ENCODE measurements at regions of chr3 and their contacts with region 1.

Region 1: DNA sequence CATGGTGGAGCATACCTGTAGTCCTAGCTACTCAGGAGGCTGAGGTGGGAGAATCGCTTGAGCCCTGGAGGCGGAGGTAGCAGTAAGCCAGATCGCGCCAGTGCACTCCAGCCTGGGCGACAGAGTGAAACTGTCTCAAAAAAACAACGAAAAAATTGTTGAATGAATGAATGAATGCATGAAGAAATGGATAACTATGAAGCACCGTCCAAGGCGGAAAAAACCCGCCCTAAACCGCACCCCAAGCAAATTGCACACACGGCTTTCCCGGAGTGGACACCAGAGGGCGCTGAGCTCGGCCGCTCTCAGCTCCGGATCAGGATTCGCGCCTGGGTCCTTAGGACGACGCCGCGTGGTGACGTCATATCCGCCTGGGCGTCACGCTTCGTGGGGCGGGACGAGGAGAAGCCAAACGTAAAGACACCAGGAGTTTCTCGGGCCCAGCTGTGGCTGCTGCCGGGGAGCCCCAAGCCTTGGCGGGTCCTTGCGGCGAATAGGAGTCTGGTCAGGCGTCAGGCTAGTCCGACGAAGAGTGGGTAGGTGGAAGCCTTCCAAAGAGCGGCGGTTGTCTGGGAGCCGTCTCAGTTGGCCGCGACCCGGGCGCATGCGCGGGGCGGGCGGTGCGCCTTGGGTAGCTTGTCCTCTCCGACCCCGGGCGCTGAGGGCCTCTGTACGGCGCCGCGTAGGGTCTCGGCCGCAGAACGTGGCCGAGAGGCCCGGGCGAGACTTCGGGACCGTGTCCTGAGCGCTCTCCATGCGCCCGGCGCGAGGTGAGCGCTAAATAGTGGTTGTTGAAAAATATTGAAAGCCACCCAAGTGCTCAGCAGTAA is at the starts of genes HTD2 and RPP14:
- DNase-seq: peak; percentile 99
- ATAC-seq: peak; percentile 90
- H3K4me3 ChIP-seq: peak within 1 kb of the TSS; percentile 74 to 87 (median 83)
- H3K4me3 Mint-ChIP-seq: peak within 1 kb of the TSS; percentile 98
- H3K27ac ChIP-seq: peak within 1 kb of the TSS; percentile 96 to 99
- H3K27ac Mint-ChIP-seq: peak within 1 kb of the TSS; percentile 100
- H3K4me1 ChIP-seq: peaks cover 24 to 27% of the 10 kb centered on the region in 2 donors
- H3K4me1 Mint-ChIP-seq: peaks cover 31% of the 10 kb centered on the region
- H3K27me3 ChIP-seq: no peaks in the 10 kb centered on the region
- H3K27me3 Mint-ChIP-seq: no peaks in the 10 kb centered on the region
- CTCF ChIP-seq: peak; percentile 90
- total RNA-seq, gene HTD2: 8.8 and 9.3 TPM in 2 replicates
- total RNA-seq, gene RPP14: 17.9 and 18.3 TPM in 2 replicates

Region 2: DNA sequence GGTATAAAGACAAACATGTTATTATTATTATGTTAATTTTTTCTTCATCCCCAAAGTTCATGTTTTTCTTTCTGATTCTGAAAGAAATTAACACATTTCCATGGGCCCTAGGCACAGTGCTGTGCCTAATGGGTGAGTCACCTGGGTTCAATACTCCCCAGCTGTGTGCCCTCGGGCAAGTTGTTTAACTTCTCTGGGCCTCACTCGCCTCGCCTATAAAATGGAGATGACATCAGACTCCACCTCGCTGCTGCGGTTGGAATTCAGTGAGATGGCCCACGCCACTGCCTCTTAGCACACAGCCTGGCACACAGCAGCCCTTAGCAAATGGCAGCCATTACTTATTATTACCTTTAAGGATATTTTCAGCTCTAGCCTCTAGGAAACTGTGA is 117.9 kb before region 1 on chr3:
- CTCF ChIA-PET with region 1: interaction called, 334 read pairs
- POLR2A ChIA-PET with region 1: interaction called, 10 read pairs
- intact Hi-C with region 1: loop called (anchors 1 kb)
- DNase-seq: no peak
- ATAC-seq: no peak
- H3K4me3 ChIP-seq: no peak overlapping the region
- H3K4me3 Mint-ChIP-seq: no peak overlapping the region
- H3K27ac ChIP-seq: no peak overlapping the region
- H3K27ac Mint-ChIP-seq: no peak overlapping the region
- H3K4me1 ChIP-seq: peaks cover 0 to 5% of the 10 kb centered on the region in 2 donors
- H3K4me1 Mint-ChIP-seq: peaks cover 3% of the 10 kb centered on the region
- H3K27me3 ChIP-seq: no peaks in the 10 kb centered on the region
- H3K27me3 Mint-ChIP-seq: no peaks in the 10 kb centered on the region
- CTCF ChIP-seq: no peak

Region 3: DNA sequence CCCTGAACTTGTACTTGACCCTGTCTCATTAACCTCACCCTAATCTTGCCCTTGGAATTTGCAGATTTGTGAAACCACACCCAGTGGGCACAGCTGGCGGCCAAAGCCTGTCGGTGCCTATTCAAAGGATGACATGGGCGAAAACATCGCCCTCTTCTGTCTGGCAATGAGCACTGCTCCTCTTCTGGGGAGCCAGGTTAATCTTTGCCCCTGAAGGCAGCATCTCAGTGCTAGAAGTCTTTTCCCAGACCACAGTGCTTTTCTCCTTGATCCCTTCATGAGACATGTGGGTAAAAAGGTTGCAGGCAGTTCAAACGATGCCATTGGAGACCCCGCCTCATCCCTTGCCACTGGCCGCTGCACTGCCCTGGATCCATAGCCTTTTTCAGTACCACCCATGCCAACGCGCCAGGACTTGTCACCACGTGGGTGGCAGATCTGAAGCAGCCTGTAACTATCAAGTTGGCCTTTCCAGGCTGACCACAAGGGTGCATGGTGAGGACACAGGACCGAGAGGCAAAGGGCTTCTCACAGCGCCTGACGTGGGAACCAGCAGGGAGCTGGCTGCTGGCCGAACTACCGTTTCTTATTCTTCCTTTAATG is 88.8 kb before region 1 on chr3:
- CTCF ChIA-PET with region 1: interaction called, 42 read pairs
- POLR2A ChIA-PET with region 1: interaction called, 8 read pairs
- intact Hi-C with region 1: loop called (anchors 1 kb)
- DNase-seq: peak; percentile 84
- ATAC-seq: peak; percentile 60
- H3K4me3 ChIP-seq: peak overlapping the region in 4 of 5 experiments; percentile 34 to 61 (median 48)
- H3K4me3 Mint-ChIP-seq: peak overlapping the region; percentile 79
- H3K27ac ChIP-seq: peak overlapping the region in 1 of 2 donors; percentile 52
- H3K27ac Mint-ChIP-seq: peak overlapping the region; percentile 69
- H3K4me1 ChIP-seq: peaks cover 52 to 58% of the 10 kb centered on the region in 2 donors
- H3K4me1 Mint-ChIP-seq: peaks cover 49% of the 10 kb centered on the region
- H3K27me3 ChIP-seq: no peaks in the 10 kb centered on the region
- H3K27me3 Mint-ChIP-seq: no peaks in the 10 kb centered on the region
- CTCF ChIP-seq: peak; percentile 97

Region 4: DNA sequence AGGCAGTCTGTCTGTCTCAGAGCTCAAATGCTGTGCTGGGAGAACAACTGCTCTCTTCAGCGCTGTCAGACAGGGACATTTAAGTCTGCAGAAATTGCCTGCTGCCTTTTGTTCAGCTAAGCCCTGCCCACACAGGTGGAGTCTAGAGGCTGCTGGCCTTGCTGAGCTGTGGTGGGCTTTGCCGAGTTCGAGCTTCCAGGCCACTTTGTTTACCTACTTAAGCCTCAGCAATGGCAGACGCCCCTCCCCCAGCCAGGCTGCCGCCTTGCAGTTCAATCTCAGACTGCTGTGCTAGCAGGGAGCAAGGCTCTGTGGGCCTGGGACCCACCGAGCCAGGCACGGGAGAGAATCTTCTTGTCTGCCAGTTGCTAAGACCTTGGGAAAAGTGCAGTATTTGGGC is 25.0 kb before region 1 on chr3:
- CTCF ChIA-PET with region 1: no interaction called
- POLR2A ChIA-PET with region 1: no interaction called
- intact Hi-C with region 1: no loop called
- DNase-seq: no peak
- ATAC-seq: no peak
- H3K4me3 ChIP-seq: no peak overlapping the region
- H3K4me3 Mint-ChIP-seq: no peak overlapping the region
- H3K27ac ChIP-seq: no peak overlapping the region
- H3K27ac Mint-ChIP-seq: no peak overlapping the region
- H3K4me1 ChIP-seq: no peaks in the 10 kb centered on the region
- H3K4me1 Mint-ChIP-seq: no peaks in the 10 kb centered on the region
- H3K27me3 ChIP-seq: no peaks in the 10 kb centered on the region
- H3K27me3 Mint-ChIP-seq: no peaks in the 10 kb centered on the region
- CTCF ChIP-seq: no peak

Region 5: DNA sequence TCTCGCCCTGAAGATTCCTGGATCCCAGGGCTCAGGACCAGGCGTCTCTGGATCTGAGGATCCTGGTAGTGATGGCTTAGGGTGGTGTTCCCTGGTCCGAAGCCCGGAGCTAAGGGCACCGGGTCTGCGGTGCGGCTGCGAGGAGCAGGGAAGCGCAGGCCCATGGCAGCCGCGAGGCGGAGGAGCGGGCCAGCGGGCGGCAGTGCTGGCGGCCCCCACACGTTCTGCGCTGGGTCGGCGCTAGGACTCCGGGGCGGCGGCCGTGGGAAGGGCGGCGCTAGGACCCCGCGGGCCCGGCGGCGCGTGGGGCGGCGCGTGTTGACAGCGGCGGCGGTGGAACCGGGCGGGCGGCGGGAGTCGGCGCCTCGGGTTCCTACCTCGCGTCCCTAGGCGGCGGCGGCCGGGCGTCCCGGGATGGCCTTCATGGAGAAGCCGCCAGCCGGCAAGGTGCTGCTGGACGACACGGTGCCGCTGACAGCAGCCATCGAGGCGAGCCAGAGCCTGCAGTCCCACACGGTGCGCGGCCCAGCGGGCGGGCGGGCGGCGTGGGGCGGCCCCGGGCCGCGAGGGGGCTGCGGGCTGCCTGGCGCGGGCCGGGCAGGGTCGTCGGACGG is 26.6 kb after region 1 on chr3 and contains the start of gene PXK:
- CTCF ChIA-PET with region 1: interaction called, 46 read pairs
- POLR2A ChIA-PET with region 1: interaction called, 3 read pairs
- intact Hi-C with region 1: loop called (anchors 1 kb)
- DNase-seq: peak; percentile 86
- ATAC-seq: peak; percentile 76
- H3K4me3 ChIP-seq: peak within 1 kb of the TSS; percentile 72 to 90 (median 87)
- H3K4me3 Mint-ChIP-seq: peak within 1 kb of the TSS; percentile 100
- H3K27ac ChIP-seq: peak within 1 kb of the TSS; percentile 9 to 75
- H3K27ac Mint-ChIP-seq: peak within 1 kb of the TSS; percentile 100
- H3K4me1 ChIP-seq: peaks cover 34 to 41% of the 10 kb centered on the region in 2 donors
- H3K4me1 Mint-ChIP-seq: peaks cover 50% of the 10 kb centered on the region
- H3K27me3 ChIP-seq: no peaks in the 10 kb centered on the region
- H3K27me3 Mint-ChIP-seq: no peaks in the 10 kb centered on the region
- CTCF ChIP-seq: no peak
- total RNA-seq, gene PXK: 104 and 109 TPM in 2 replicates

Region 6: GRCh38 chr3:58414538-58415197 is 108.6 kb after region 1 on chr3:
- CTCF ChIA-PET with region 1: interaction called, 53 read pairs
- POLR2A ChIA-PET with region 1: no interaction called
- intact Hi-C with region 1: loop called (anchors 1 kb)
- DNase-seq: peak; percentile 80
- ATAC-seq: peak; percentile 77
- H3K4me3 ChIP-seq: no peak overlapping the region
- H3K4me3 Mint-ChIP-seq: no peak overlapping the region
- H3K27ac ChIP-seq: peak overlapping the region; percentile 27 to 46
- H3K27ac Mint-ChIP-seq: peak overlapping the region; percentile 68
- H3K4me1 ChIP-seq: peaks cover 14 to 18% of the 10 kb centered on the region in 2 donors
- H3K4me1 Mint-ChIP-seq: peaks cover 46% of the 10 kb centered on the region
- H3K27me3 ChIP-seq: no peaks in the 10 kb centered on the region
- H3K27me3 Mint-ChIP-seq: no peaks in the 10 kb centered on the region
- CTCF ChIP-seq: peak; percentile 77

Region 7: DNA sequence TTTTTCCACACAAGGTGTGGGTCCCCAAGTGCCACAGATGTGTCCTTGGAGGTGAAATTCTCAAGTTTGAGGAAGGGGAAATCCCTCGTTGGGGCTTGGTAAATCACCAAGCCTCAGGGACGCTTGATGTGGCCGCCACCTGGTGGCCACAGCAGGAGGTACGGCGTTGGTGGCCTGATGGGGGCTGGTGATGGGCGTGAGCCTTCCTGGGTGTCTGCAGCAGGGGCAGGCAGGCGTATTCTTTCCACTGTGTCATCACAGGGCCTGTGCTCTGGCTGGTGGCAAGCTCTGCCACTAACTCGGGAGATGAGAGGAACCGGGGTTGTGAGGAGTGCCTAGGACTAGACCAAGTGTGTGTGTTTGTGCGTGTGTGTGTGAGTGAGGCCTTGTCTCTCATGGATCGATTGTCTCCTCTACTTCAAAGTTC is 226.7 kb after region 1 on chr3:
- CTCF ChIA-PET with region 1: interaction called, 101 read pairs
- POLR2A ChIA-PET with region 1: interaction called, 4 read pairs
- intact Hi-C with region 1: loop called (anchors 1 kb)
- DNase-seq: peak; percentile 89
- ATAC-seq: peak; percentile 99
- H3K4me3 ChIP-seq: no peak overlapping the region
- H3K4me3 Mint-ChIP-seq: no peak overlapping the region
- H3K27ac ChIP-seq: no peak overlapping the region
- H3K27ac Mint-ChIP-seq: peak overlapping the region; percentile 7
- H3K4me1 ChIP-seq: peaks cover 6 to 8% of the 10 kb centered on the region in 2 donors
- H3K4me1 Mint-ChIP-seq: peaks cover 6% of the 10 kb centered on the region
- H3K27me3 ChIP-seq: no peaks in the 10 kb centered on the region
- H3K27me3 Mint-ChIP-seq: no peaks in the 10 kb centered on the region
- CTCF ChIP-seq: peak; percentile 91